AG04449 (cell line): ENCODE measurements at regions of chr7 and their contacts with region 1.

Region 1: GRCh38 chr7:94087664-94088352 is 83.7 kb upstream of the BET1 start:
- DNase-seq: peak; percentile 23
- H3K4me3 ChIP-seq: no peak overlapping the region; the same call in 1 of the 2 replicates
- CTCF ChIP-seq: peak; percentile 68

Region 2: DNA sequence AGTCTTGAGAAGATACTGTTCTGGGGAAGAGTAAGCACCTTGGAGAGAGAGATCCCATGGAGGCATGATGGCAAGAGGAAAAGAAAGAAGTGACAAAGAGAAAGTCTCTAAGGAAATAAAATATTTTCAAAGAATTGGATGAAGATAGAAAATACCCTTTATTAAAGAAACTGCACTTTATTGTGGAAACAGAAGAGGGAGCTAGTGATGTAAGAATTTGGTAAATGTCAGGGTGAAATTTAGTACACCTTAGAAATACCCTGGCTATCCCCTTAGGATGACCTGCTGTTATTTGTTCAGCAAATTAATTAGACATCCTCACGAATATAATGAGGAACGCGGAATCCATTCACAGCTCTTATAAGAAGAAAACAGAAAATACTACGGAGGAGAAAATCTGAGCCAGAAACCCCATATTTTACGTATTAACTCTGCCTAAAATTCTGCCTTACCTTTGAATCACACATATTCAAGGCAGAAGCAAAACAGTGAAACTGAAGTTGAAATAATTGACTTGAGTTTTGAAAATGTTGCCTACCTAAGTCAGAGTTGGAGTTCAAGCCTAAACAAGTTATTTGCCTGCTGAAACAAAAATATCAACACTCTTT is 288.0 kb before region 1 on chr7:
- CTCF ChIA-PET with region 1: interaction called, 51 read pairs
- POLR2A ChIA-PET with region 1: no interaction called
- DNase-seq: no peak
- H3K4me3 ChIP-seq: no peak overlapping the region
- CTCF ChIP-seq: peak; percentile 21

Region 3: DNA sequence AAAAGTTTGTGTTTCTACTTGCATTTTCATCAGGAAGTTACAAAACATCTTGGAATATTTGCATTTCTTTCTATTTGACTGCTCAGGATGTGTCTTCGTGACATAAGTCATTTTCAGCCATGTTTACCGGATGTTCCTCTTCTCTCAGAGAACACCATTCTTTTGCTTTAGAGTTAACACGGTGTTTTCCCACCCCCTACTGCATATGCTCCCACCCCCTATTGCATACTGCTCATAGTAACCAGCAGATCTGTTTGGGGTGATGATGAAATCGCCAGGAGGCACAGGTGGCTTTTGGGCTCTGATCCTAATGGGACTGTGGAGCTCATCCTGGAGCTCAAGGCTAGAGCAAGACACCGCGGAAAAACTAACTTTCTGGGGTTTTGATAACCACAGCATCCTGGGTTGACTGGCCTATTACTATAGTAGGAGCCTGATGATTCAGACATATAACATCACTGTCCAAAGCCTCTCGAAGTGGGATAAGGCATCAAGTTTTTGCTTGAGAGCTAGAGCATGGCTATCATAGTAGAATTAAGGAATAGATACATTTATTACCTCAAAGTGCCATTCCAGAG is 18.6 kb before region 1 on chr7:
- CTCF ChIA-PET with region 1: interaction called, 33 read pairs
- POLR2A ChIA-PET with region 1: no interaction called
- DNase-seq: no peak
- H3K4me3 ChIP-seq: no peak overlapping the region
- CTCF ChIP-seq: no peak

Region 4: GRCh38 chr7:94423863-94424735 is 336.3 kb after region 1 on chr7:
- CTCF ChIA-PET with region 1: no interaction called
- POLR2A ChIA-PET with region 1: no interaction called
- DNase-seq: peak; percentile 47
- H3K4me3 ChIP-seq: no peak overlapping the region
- CTCF ChIP-seq: no peak